ENCODE measurements at regions of chr3 and their contacts with region 1.

Region 1: DNA sequence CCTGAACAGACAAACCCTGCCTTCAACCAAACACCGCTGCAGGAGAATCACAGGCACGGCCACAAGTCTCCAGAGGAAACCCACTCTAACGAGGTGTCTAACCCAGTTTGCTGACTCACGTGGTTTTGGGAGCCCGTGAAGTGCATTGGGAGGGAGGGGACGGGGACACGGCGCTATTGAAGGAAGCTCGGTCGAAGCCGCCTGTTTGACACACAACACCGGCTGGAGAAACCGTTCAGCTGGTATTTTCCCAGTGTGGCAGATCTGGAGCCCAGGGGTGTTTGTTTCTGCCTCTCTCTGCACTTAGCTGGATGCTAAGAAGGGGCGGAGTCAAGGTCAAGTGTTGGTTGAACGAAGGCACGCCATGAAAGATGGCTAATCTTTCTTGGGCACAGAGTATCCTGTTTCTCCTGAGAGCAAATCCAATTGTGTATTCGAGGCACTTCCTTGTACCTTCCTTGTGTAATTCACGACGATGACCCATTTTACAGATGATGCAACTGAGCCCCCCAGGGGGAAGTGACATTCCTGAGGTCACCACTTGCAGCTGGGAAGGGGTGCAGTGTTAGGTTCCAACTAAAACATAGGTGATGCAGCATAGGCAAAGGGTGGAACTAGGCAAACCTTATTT is 22.4 kb downstream of the SLC6A6 start:
- DNase-seq: no peak
- ATAC-seq: peak; percentile 15
- H3K4me3 Mint-ChIP-seq: peak overlapping the region; percentile 81
- H3K27ac Mint-ChIP-seq: peak overlapping the region; percentile 94
- H3K4me1 Mint-ChIP-seq: peaks cover 82% of the 10 kb centered on the region
- H3K27me3 Mint-ChIP-seq: no peaks in the 10 kb centered on the region
- CTCF ChIP-seq: no peak

Region 2: DNA sequence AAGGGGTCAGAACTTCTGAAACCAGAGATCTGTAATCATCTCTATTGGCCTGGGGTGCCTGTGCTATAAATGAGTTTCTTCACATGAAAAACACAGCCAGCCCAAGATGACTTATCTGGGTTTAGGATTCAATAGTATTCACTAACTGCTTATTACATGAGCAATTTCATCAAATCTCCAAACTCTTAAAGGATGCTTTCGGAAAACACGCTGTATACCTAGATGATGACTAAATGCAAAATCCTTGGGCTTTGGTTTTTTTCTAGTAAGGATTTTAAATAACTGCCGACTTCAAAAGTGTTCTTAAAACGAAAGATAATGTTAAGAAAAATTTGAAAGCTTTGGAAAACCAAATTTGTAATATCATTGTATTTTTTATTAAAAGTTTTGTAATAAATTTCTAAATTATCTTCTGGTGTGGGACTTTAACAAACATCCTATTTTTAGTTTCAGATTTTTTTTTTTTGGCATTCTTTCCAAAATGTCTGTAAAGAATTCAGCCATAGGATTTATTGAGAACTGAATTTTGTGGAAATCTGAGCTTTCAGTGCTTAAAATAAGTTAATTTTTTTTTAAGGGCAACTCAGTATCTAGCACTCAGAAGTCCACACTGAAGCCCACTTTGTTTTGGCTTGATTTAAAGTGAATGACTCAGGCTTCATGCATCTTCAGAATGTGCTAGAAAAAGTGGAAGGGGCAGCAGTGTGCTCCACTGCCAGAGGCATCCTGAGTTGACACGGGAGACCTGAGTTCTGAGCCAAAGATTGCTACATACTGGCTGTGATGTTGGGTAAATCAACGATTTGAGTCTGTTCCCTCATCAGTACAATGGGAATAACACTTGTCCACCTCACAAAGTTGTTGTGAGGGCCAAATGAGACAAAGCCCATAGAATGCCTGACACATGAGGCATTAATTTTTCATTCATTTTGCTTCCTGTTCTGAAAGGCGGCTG is 281.3 kb before region 1 on chr3:
- CTCF ChIA-PET with region 1: no interaction called
- POLR2A ChIA-PET with region 1: no interaction called
- intact Hi-C with region 1: no loop called
- DNase-seq: no peak
- ATAC-seq: no peak
- H3K4me3 Mint-ChIP-seq: no peak overlapping the region
- H3K27ac Mint-ChIP-seq: peak overlapping the region; percentile 96
- H3K4me1 Mint-ChIP-seq: peaks cover 20% of the 10 kb centered on the region
- H3K27me3 Mint-ChIP-seq: no peaks in the 10 kb centered on the region
- CTCF ChIP-seq: no peak

Region 3: DNA sequence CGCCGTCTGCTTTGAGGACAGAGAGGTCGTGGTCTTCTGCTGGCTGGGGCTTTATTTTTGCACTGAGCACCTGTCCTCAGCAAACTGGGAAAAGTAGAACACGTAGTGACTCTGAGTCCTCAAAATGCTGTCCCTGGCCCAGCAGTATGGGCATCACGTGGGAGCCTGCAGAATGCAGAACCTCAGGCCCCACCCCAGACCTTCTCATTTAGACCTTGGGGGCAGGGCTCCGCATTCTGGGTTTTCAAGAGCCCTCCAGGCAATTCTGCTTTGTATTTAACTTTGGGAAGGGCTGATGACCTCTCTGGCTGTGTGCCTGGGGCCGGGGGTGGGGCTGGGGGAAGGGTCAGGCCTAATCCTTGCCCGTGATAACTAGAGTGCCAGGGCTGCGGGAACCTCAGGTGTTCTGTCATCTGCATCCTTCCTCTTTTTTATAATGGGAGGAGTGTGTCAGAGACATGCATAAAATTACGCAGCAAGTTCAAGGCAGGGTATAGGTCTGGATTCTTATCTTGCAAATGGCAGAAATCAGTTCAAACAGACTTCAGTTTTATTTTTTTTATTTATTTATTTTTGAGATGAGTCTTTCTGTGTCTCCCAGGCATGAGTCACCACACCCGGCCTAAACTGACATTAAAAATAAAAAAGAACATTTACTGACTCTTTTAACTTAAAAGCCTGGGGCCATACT is 11.3 kb before region 1 on chr3:
- CTCF ChIA-PET with region 1: no interaction called
- POLR2A ChIA-PET with region 1: interaction called, 377 read pairs
- intact Hi-C with region 1: loop called (anchors 1 kb)
- DNase-seq: no peak
- ATAC-seq: peak; percentile 75
- H3K4me3 Mint-ChIP-seq: no peak overlapping the region
- H3K27ac Mint-ChIP-seq: peak overlapping the region; percentile 24
- H3K4me1 Mint-ChIP-seq: peaks cover 53% of the 10 kb centered on the region
- H3K27me3 Mint-ChIP-seq: no peaks in the 10 kb centered on the region
- CTCF ChIP-seq: no peak